Naive thymus-derived CD4-positive, alpha-beta T cell (primary cell): ENCODE measurements at regions of chr2 and their contacts with region 1.

Region 1: GRCh38 chr2:25951071-25951547 is 31.2 kb downstream of the KIF3C start:
- DNase-seq: peak; percentile 39 to 76 (median 57)
- ATAC-seq: peak; percentile 95
- H3K4me3 ChIP-seq: no peak overlapping the region
- H3K4me3 Mint-ChIP-seq: no peak overlapping the region
- H3K27ac ChIP-seq: no peak overlapping the region
- H3K27ac Mint-ChIP-seq: peak overlapping the region in 1 of 9 donors; percentile 18
- H3K4me1 ChIP-seq: no peaks in the 10 kb centered on the region
- H3K4me1 Mint-ChIP-seq: peaks cover 0 to 4% (median 0%) of the 10 kb centered on the region in 7 donors
- H3K27me3 ChIP-seq: no peaks in the 10 kb centered on the region
- H3K27me3 Mint-ChIP-seq: no peaks in the 10 kb centered on the region

Region 2: GRCh38 chr2:25606892-25607291 is 344.2 kb before region 1 on chr2:
- CTCF ChIA-PET with region 1: no interaction called
- POLR2A ChIA-PET with region 1: no interaction called
- intact Hi-C with region 1: loop called in 1 of 2 experiments (anchors 5 kb)
- DNase-seq: peak in 5 of 9 donors; percentile 20 to 47 (median 33)
- ATAC-seq: peak; percentile 57
- H3K4me3 ChIP-seq: no peak overlapping the region
- H3K4me3 Mint-ChIP-seq: no peak overlapping the region
- H3K27ac ChIP-seq: no peak overlapping the region
- H3K27ac Mint-ChIP-seq: no peak overlapping the region
- H3K4me1 ChIP-seq: no peaks in the 10 kb centered on the region
- H3K4me1 Mint-ChIP-seq: peaks cover 0 to 21% (median 4%) of the 10 kb centered on the region in 7 donors
- H3K27me3 ChIP-seq: no peaks in the 10 kb centered on the region
- H3K27me3 Mint-ChIP-seq: no peaks in the 10 kb centered on the region

Region 3: GRCh38 chr2:25844089-25844488 is 107.0 kb before region 1 on chr2:
- CTCF ChIA-PET with region 1: no interaction called
- POLR2A ChIA-PET with region 1: no interaction called
- intact Hi-C with region 1: no loop called
- DNase-seq: no peak
- ATAC-seq: no peak
- H3K4me3 ChIP-seq: no peak overlapping the region
- H3K4me3 Mint-ChIP-seq: no peak overlapping the region
- H3K27ac ChIP-seq: no peak overlapping the region
- H3K27ac Mint-ChIP-seq: no peak overlapping the region
- H3K4me1 ChIP-seq: peaks cover 0 to 3% of the 10 kb centered on the region in 2 donors
- H3K4me1 Mint-ChIP-seq: peaks cover 4 to 8% (median 7%) of the 10 kb centered on the region in 7 donors
- H3K27me3 ChIP-seq: no peaks in the 10 kb centered on the region
- H3K27me3 Mint-ChIP-seq: no peaks in the 10 kb centered on the region

Region 4: DNA sequence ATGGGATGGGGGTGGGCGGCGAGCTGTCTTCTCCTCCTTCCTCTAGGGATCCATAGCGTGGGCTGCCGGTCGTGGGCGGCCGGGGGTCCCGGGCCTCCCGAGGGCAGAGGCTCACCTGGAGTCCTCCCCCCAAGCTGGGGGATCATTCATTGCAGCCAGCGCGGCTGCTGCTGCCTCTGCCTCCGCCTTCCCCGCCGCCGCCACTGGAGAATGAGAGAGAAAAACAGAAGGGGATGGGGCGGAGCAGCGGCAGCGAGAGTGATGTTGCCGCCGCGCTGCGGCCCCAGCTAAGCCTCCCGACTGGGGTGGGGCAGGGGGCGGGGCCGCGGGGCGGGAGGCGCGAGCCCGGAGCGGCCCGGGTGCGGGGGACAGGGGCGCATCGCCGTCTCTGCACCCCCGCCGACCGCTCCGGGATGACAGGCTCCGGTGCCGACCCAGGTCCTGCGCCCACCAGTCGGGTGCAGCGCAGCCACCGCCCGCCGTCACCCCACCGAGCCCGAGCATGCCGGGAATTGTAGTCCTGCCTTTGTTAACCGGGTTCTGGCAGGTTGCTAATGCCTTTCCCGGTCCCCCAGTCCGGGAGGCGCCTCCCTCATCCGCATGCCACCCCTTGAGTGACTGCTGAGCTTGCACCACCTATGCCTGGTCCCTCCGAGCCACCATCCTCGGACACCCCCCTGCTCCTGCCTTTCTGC is 31.3 kb after region 1 on chr2 and contains the start of gene KIF3C:
- CTCF ChIA-PET with region 1: interaction called, 3 read pairs
- POLR2A ChIA-PET with region 1: interaction called, 3 read pairs
- intact Hi-C with region 1: loop called in 1 of 2 experiments (anchors 1 kb)
- DNase-seq: peak; percentile 59 to 76 (median 73)
- ATAC-seq: peak; percentile 93
- H3K4me3 ChIP-seq: peak within 1 kb of the TSS; percentile 64
- H3K4me3 Mint-ChIP-seq: peak within 1 kb of the TSS; percentile 83 to 94 (median 87)
- H3K27ac ChIP-seq: peak within 1 kb of the TSS; percentile 62
- H3K27ac Mint-ChIP-seq: peak within 1 kb of the TSS; percentile 28 to 89 (median 81)
- H3K4me1 ChIP-seq: peaks cover 0 to 5% of the 10 kb centered on the region in 2 donors
- H3K4me1 Mint-ChIP-seq: peaks cover 12 to 24% (median 16%) of the 10 kb centered on the region in 7 donors
- H3K27me3 ChIP-seq: no peaks in the 10 kb centered on the region
- H3K27me3 Mint-ChIP-seq: no peaks in the 10 kb centered on the region
- total RNA-seq, gene KIF3C: 2.9 to 6.3 (median 5.7) TPM

Region 5: GRCh38 chr2:26144953-26145680 is 194.0 kb after region 1 on chr2:
- CTCF ChIA-PET with region 1: interaction called, 7 read pairs
- POLR2A ChIA-PET with region 1: no interaction called
- intact Hi-C with region 1: loop called in 1 of 2 experiments (anchors 1 kb)
- DNase-seq: peak; percentile 22 to 59 (median 47)
- ATAC-seq: peak; percentile 73
- H3K4me3 ChIP-seq: no peak overlapping the region
- H3K4me3 Mint-ChIP-seq: no peak overlapping the region
- H3K27ac ChIP-seq: no peak overlapping the region
- H3K27ac Mint-ChIP-seq: peak overlapping the region in 3 of 9 donors; percentile 4 to 21 (median 7)
- H3K4me1 ChIP-seq: no peaks in the 10 kb centered on the region
- H3K4me1 Mint-ChIP-seq: peaks cover 0 to 5% (median 0%) of the 10 kb centered on the region in 7 donors
- H3K27me3 ChIP-seq: no peaks in the 10 kb centered on the region
- H3K27me3 Mint-ChIP-seq: peaks cover 6 to 10% (median 8%) of the 10 kb centered on the region in 5 donors

Region 6: GRCh38 chr2:26577434-26578112 is 626.5 kb after region 1 on chr2:
- CTCF ChIA-PET with region 1: interaction called, 5 read pairs
- POLR2A ChIA-PET with region 1: no interaction called
- intact Hi-C with region 1: loop called in 1 of 2 experiments (anchors 1 kb)
- DNase-seq: peak; percentile 17 to 66 (median 52)
- ATAC-seq: peak; percentile 88
- H3K4me3 ChIP-seq: no peak overlapping the region
- H3K4me3 Mint-ChIP-seq: no peak overlapping the region
- H3K27ac ChIP-seq: no peak overlapping the region
- H3K27ac Mint-ChIP-seq: no peak overlapping the region
- H3K4me1 ChIP-seq: no peaks in the 10 kb centered on the region
- H3K4me1 Mint-ChIP-seq: peaks cover 0 to 5% (median 0%) of the 10 kb centered on the region in 7 donors
- H3K27me3 ChIP-seq: peaks cover 0 to 5% of the 10 kb centered on the region in 2 donors
- H3K27me3 Mint-ChIP-seq: peaks cover 5 to 13% (median 10%) of the 10 kb centered on the region in 5 donors